Heart right ventricle (tissue), 16 donors: ENCODE measurements at regions of chr4 and their contacts with region 1.

Region 1: GRCh38 chr4:6386091-6386490 is 86.3 kb downstream of the PPP2R2C start:
- DNase-seq: no peak
- ATAC-seq: peak in 5 of 8 donors; percentile 43 to 73 (median 63)
- H3K4me3 ChIP-seq: no peak overlapping the region
- H3K27ac ChIP-seq: no peak overlapping the region
- H3K4me1 ChIP-seq: peaks cover 0 to 8% (median 0%) of the 10 kb centered on the region in 9 donors
- H3K27me3 ChIP-seq: peaks cover 0 to 45% (median 10%) of the 10 kb centered on the region in 7 donors
- CTCF ChIP-seq: no peak

Region 2: DNA sequence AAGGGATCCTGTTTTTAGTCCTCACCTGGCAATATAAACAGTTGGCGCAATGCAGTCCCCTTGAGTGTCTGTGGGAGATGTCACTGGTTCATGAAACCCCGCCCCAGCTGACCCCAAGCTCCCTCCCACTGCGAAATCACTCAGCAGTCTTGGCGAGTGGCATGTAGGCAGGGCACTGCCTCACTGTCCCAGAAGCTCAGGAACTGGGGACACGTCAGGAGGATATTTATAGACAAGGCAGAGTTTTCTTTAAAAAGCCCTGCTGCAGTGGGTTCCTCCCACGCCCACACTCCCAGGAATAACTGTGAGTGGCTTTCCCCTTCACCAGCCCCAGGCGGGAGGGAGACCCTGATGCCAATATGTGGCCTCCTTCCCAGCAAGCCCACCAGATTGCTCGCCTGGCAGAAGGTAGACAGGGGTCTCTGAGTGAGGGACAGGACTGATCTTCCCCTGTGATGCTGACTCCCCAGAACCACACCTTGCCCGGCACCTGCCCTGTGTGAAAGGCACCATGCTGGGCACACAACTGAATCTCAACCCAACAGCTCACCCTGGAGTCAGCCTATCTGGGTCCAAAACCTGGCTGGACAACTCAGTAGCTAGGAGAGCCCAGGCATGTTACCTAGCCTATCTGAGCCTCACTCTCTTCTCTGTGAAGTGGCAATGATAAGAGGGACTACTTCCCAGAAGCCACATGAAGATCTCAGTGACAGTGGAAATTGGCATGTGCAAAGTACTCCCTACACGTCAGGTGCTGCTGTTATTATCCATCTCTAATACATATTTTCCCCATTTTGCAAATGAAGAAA is 130.9 kb after region 1 on chr4:
- intact Hi-C with region 1: loop called in 1 of 10 experiments (anchors 10 kb)
- DNase-seq: peak; percentile 27 to 28
- ATAC-seq: peak; percentile 55 to 93 (median 88)
- H3K4me3 ChIP-seq: no peak overlapping the region
- H3K27ac ChIP-seq: peak overlapping the region in 4 of 10 donors; percentile 12 to 45 (median 38)
- H3K4me1 ChIP-seq: peaks cover 0 to 8% (median 0%) of the 10 kb centered on the region in 9 donors
- H3K27me3 ChIP-seq: peaks cover 0 to 3% (median 0%) of the 10 kb centered on the region in 7 donors
- CTCF ChIP-seq: no peak